Gastrocnemius medialis (tissue), 4 donors: ENCODE measurements at regions of chr6 and their contacts with region 1.

Region 1: DNA sequence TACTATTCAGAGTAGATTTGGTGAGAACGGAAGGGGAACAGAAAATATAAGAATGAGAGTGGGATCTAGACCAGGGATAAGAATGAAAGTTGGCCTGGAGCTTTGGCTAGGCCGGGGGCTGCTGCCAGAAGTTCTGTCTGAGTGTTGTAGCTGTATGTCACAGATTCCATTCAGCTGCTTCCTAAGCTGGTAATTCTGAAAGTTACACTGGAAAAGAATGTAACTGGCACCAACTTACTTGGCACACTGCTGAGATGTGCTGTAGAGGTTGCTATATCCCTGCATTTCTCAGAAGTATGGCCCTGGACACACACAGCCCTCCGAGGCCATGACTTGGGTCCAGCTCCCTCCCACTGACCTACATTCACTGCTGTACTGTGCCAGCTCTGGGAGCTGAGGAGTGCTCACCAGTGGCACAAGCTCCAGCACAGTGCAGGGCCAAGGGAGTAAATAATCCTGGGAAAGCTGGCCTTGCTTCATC is 25.8 kb upstream of the TMEM217 start:
- DNase-seq: peak; percentile 90 to 95
- ATAC-seq: peak; percentile 75 to 76
- H3K4me3 ChIP-seq: peak overlapping the region in 1 of 4 donors; percentile 8
- H3K27ac ChIP-seq: peak overlapping the region; percentile 92 to 97 (median 94)
- H3K4me1 ChIP-seq: peaks cover 58% of the 10 kb centered on the region in 2 donors
- H3K27me3 ChIP-seq: no peaks in the 10 kb centered on the region
- CTCF ChIP-seq: no peak
- POLR2A ChIP-seq: no peak

Region 2: DNA sequence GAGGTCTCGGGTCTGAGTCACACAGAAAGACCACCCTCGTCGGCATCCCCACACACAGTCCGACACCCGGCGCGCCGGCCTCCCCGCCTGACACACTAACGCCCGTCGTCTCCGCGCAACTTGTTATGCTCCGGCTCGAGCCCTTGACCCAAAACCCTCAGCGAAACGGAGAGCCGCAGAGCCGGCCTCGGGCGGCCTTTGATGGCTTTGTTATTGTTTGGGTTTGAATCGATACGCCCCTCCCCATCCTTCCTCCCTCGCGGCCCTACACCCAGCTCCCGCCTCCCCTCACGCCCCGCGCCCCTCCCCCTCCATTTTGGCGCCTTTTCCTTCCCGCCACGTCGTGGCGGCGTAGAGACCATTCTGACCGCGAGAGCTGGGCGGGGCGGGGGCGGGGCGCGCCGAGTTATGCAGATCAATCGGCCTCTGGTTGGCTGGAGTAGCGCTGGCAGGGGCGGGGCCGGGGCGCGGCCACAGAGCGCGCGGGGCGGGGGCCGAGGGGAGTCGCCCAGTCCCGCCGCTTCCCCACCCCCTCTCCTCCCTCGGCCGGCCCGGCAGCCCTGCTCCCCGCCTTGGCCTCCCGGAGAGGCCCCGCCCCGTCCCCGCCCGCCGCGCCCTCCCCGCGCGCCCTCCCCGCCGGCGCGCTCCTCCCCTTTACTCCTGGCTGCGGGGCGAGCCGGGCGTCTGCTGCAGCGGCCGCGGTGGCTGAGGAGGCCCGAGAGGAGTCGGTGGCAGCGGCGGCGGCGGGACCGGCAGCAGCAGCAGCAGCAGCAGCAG is 114.0 kb before region 1 on chr6 and contains the start of gene PIM1:
- in situ Hi-C with region 1: no loop called
- intact Hi-C with region 1: no loop called
- DNase-seq: peak; percentile 98 to 99
- ATAC-seq: peak; percentile 68 to 70
- H3K4me3 ChIP-seq: peak within 1 kb of the TSS; percentile 69 to 97 (median 90)
- H3K27ac ChIP-seq: peak within 1 kb of the TSS; percentile 92 to 95 (median 93)
- H3K4me1 ChIP-seq: peaks cover 13 to 27% of the 10 kb centered on the region in 2 donors
- H3K27me3 ChIP-seq: no peaks in the 10 kb centered on the region
- CTCF ChIP-seq: no peak
- POLR2A ChIP-seq: peak; percentile 96
- total RNA-seq, gene PIM1: 5.0 to 23.0 (median 13.0) TPM

Region 3: DNA sequence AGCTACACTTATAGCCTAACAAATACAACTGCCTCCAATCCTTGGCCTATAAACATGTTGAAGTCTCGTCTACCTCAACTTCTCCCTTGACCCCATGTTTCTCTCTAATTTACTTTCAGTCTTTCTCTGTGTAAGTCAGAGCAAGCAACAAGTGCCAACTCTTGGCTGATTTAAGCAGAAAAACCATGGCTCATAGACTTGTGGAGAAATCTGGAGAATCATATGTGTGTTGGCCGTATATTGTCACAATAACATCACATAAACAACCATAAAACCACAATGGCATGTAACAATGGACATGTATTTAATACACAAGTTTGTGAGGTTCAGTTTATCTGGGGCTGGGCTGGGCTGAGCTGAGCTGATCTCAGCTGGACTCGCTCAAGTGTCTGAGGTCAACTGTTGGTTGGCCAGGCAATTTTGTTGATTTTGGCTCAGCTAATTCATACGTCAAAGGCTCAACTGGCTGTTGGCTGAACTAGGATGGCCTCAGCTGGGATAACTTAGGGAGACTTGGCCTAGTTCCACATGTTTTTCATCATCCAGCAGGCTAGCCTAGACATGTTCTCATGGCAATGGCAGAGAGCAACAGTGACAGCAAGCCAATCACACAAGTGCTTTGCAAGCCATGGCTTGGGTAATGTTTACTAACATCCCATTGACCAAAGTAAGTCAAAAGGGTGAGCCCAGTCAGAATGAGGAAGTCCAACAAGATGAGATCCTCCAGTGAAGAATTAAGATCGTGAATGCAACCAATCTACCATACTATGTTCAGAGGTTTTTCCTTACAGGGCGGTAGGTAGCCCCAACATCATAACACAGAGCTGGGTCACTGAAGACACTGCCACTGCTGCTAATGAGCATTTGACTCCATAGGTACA is 39.0 kb before region 1 on chr6:
- in situ Hi-C with region 1: no loop called
- intact Hi-C with region 1: loop called (anchors 2 kb)
- DNase-seq: peak; percentile 73 to 92
- ATAC-seq: peak; percentile 90 to 91
- H3K4me3 ChIP-seq: no peak overlapping the region
- H3K27ac ChIP-seq: peak overlapping the region; percentile 70 to 79 (median 74)
- H3K4me1 ChIP-seq: peaks cover 36 to 42% of the 10 kb centered on the region in 2 donors
- H3K27me3 ChIP-seq: no peaks in the 10 kb centered on the region
- CTCF ChIP-seq: no peak
- POLR2A ChIP-seq: peak; percentile 25 to 61